ENCODE measurements at regions of chr19 and their contacts with region 1.

Region 1: DNA sequence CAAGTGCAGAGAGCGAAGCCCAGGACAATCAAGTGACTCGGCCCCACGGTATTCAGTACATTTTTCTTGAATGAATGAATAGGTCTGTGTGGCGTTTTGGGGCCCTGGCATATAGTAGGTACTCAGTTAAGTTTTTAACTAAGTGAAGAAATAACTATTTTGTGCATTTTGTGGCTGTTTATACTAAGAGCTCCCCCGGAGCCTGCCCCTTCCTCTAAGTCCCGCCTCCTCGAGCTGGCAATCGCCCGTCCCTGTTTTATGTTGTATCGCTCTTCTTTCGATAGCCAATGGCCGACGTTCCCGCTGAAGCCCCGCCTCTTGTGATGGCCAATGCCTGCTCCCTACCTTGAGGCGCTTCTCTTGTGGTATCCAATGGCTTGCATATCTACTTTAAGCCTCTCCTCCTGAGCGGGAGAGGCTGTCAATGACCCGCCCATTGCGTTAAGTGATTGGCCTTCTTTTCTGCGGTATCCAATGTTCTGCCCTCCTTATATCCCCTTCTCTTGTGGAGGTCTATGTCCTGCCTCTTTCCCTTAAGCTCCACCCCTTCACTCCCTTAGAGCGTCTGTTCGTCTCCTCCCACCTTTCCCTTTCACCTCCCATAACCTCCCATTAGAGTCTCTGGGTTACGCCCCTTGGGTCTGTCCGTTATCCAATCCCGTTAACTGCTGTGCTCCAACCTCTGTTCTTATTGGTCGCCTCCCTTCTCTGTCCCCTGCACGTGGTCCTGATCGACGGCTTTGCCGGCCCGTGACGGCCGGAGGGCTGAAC is 509 bp upstream of the HDGFL2 start:
- DNase-seq: peak; percentile 97
- H3K4me3 Mint-ChIP-seq: no peak overlapping the region
- H3K27ac Mint-ChIP-seq: no peak overlapping the region
- H3K4me1 Mint-ChIP-seq: peaks cover 18% of the 10 kb centered on the region
- H3K27me3 Mint-ChIP-seq: no peaks in the 10 kb centered on the region

Region 2: DNA sequence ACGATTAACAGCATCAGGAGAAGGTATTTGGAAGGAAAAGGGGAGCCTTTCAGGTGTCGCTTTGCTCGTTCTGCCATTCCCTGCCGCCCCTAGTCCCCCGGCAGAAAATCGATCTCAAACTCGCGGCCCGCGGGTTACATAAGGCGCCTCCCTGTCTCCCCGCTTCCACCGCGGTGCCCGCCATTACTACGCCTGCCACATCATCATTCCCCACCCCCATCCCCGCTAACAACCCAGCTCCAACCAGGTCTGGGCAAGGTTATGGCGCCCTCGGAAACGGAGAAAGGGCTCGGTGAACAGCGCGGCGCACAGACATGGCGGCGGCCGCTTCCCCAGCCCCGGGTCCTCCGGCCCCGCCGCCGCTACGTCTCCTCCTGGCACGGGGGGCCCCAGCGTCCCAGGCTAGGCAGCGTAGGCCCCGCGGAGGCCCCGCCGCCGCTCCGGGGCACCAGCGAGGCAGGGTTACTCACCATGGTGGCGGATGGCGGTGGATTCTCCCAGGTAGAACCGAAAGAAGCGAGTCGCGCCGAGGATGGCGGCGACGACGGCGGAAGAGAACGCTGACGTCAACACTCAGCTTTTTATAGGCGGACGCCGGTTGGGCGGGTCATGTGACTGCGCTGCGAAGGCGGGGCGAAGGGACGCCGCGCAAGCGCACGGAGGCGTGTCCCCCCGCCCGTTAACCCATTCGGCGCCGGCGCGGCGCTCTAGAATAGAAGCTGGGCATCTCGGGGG is 486.5 kb before region 1 on chr19 and contains the start of gene EEF2:
- intact Hi-C with region 1: loop called (anchors 2 kb)
- DNase-seq: peak; percentile 87
- H3K4me3 Mint-ChIP-seq: peak within 1 kb of the TSS; percentile 93
- H3K27ac Mint-ChIP-seq: peak within 1 kb of the TSS; percentile 91
- H3K4me1 Mint-ChIP-seq: peaks cover 43% of the 10 kb centered on the region
- H3K27me3 Mint-ChIP-seq: peaks cover 2% of the 10 kb centered on the region
- total RNA-seq, gene EEF2: 2,359 TPM in 2 replicates

Region 3: DNA sequence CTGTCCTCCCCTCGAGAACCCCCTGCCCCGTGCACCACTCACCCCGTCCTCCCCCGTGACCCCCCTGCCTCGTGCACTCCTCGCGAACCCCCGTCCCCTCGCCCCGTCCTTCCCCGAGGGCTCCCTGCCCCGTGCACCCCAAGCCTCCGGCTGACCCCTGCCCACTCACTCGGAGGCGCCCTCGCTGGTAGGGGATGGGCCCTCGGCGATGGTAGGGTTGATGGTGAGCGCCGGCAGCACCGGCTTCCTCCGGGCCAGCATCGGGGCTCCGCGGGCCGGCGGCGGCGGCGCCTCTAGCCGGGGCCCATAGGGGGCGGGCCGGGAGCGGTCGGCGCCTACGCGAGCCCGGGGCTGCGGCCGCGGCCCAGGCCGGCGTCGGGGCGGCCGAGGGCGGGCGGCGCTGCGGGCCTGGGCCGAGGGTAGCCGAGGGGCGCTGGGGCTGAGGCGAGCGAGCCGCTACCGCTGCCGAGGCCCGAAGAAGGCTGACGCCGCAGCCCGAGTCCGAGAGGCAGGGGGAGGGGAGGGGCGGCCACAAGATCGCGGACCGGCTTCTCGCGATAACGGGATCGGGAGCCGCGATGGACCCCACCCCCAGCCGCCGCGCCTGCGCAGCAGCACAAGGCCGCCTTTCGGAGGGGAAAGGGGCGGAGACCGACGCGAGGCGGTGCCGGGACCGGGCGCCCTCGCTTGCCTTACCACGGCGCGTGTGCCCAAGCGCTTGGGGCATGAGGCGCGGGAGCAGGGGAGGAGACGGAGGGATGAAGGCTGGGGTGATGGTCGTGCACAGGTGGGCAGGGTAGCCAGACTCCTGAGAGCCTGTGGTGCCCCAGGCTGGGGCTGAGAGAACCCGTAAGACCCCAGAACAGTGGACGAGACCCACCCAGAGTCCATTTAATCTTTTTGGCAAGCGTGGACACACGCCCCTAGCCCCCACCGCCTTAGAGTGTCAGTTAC is 347.7 kb before region 1 on chr19 and contains the start of gene MAP2K2:
- intact Hi-C with region 1: loop called (anchors 5 kb)
- DNase-seq: peak; percentile 94
- H3K4me3 Mint-ChIP-seq: peak within 1 kb of the TSS; percentile 100
- H3K27ac Mint-ChIP-seq: peak within 1 kb of the TSS; percentile 98
- H3K4me1 Mint-ChIP-seq: peaks cover 17% of the 10 kb centered on the region
- H3K27me3 Mint-ChIP-seq: no peaks in the 10 kb centered on the region
- total RNA-seq, gene MAP2K2: 131 and 135 TPM in 2 replicates

Region 4: DNA sequence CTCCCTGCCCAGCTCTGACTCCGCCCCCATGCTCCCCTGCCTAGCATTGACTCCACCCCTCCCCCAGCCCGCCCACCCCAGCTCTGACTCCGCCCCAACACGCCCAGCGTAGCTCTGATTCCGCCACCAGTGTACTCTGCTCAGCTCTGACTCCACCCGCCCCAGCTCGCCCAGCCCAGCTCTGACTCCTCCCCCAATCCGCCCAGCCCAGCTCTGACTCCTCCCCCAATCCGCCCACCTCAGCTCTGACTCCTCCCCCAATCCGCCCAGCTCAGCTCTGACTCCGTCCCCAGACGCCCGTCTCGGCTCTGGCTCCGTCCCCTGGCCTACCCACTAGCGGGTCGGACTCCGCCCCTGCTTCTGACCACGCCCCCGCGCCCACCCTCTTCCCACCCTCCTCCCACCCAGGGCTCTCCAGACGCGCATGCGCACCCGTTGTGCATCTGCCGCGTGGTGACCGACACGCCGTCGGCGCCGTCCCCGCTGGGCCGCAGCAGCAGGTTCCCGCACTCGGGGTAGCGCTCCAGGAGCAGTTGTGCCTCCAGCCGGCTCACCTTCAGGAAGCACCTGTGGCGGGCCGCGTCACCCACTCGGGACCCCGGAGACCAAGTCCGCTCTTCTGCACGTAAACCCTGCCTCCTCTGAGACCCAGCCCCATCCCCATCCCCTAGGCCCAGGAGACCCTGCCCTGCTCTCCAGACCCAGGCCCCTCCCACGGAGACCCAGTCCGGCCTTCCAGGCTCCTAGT is 143.2 kb before region 1 on chr19:
- intact Hi-C with region 1: loop called (anchors 1 kb)
- DNase-seq: peak; percentile 87
- H3K4me3 Mint-ChIP-seq: peak overlapping the region; percentile 84
- H3K27ac Mint-ChIP-seq: peak overlapping the region; percentile 90
- H3K4me1 Mint-ChIP-seq: peaks cover 15% of the 10 kb centered on the region
- H3K27me3 Mint-ChIP-seq: peaks cover 9% of the 10 kb centered on the region

Region 5: DNA sequence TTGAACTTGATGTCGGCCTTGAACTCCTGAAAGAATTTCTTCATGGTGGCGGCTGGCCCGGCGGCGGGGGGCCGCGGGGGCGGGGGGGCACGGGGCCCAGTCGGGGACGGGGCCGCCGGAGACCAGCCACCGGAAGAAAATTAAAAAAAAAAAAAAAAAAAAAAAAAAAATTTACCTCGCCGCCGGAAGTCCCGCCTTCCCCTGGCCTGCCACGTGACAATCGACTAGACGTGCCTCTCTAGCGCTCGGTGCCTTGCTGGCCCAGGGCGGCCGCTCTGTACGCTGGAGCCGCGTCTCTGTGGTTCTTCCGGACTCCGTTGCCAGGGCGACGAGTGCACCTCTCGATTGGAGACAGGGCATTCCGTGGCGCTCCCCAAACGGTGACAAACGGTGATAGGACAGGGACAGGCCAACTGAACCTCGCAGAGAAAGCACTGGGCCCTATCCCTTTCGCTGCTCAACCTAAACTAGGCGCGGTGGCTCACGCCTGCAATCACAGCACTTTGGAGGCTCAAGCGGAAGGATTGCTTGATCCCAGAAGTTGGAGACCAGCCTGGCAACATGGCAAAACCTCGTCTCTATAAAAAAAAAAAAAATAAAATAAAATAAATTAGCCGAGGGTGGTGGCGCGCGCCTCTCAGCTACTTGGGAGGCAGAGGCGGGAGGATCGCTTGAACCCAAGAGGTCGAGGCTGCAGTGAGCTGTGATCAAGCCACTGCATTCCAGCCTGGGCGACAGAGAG is 13.8 kb before region 1 on chr19 and contains the start of gene UBXN6:
- intact Hi-C with region 1: loop called (anchors 1 kb)
- DNase-seq: peak; percentile 98
- H3K4me3 Mint-ChIP-seq: peak within 1 kb of the TSS; percentile 92
- H3K27ac Mint-ChIP-seq: peak within 1 kb of the TSS; percentile 94
- H3K4me1 Mint-ChIP-seq: peaks cover 11% of the 10 kb centered on the region
- H3K27me3 Mint-ChIP-seq: peaks cover 2% of the 10 kb centered on the region
- total RNA-seq, gene UBXN6: 49.5 and 51.0 TPM in 2 replicates

Region 6: GRCh38 chr19:4534836-4535658 is 63.5 kb after region 1 on chr19 and contains the start of gene PLIN5:
- intact Hi-C with region 1: no loop called
- DNase-seq: no peak
- H3K4me3 Mint-ChIP-seq: no peak within 1 kb of the TSS
- H3K27ac Mint-ChIP-seq: no peak within 1 kb of the TSS
- H3K4me1 Mint-ChIP-seq: peaks cover 13% of the 10 kb centered on the region
- H3K27me3 Mint-ChIP-seq: peaks cover 6% of the 10 kb centered on the region
- total RNA-seq, gene PLIN5: not detected in 2 replicates

Region 7: GRCh38 chr19:4669723-4670480 is 198.3 kb after region 1 on chr19 and contains the start of gene MYDGF:
- intact Hi-C with region 1: loop called (anchors 1 kb)
- DNase-seq: peak; percentile 91
- H3K4me3 Mint-ChIP-seq: peak within 1 kb of the TSS; percentile 91
- H3K27ac Mint-ChIP-seq: peak within 1 kb of the TSS; percentile 77
- H3K4me1 Mint-ChIP-seq: peaks cover 5% of the 10 kb centered on the region
- H3K27me3 Mint-ChIP-seq: no peaks in the 10 kb centered on the region
- total RNA-seq, gene MYDGF: 97.1 and 98.0 TPM in 2 replicates

Region 8: DNA sequence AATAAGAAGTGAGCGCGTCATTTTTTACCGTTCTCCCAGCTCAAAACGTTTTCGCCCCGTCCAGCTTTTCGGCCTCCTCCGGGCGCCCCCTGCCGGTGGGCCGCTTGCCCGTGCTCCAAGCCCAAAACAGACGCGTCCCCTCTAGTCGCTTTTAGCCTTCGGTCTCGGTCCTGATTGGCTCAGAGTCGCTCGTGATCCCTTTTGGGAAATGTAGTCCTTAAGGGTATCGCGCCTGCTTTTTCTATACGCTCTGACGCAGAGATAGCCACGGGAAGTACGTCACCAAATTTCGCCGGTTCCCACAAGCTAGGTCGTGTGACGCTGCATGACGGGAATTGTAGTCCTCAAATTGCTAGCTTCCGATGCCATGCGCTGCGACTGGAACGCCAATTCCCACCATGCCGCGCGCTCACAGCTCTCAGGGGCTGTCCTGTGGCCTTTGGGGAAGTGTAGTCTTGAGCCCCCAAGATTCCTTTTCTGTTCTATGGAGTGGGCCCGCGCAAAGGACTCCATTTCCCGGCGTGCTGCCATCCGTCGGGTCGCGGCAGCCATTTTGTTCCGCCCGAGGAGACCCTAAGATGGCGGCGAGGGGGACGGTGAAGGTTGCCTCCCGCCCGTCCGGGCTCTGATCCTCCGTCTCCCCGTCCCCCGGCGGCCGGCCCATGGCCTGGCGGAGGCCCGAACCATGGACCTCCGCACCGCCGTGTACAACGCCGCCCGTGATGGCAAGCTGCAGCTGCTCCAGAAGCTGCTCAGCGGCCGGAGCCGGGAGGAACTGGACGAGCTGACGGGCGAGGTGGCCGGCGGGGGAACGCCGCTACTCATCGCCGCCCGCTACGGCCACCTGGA is 319.8 kb after region 1 on chr19 and contains the start of gene FEM1A:
- intact Hi-C with region 1: loop called (anchors 1 kb)
- DNase-seq: peak; percentile 98
- H3K4me3 Mint-ChIP-seq: peak within 1 kb of the TSS; percentile 89
- H3K27ac Mint-ChIP-seq: peak within 1 kb of the TSS; percentile 88
- H3K4me1 Mint-ChIP-seq: peaks cover 9% of the 10 kb centered on the region
- H3K27me3 Mint-ChIP-seq: no peaks in the 10 kb centered on the region
- total RNA-seq, gene FEM1A: 23.8 and 24.8 TPM in 2 replicates